ENCODE measurements at regions of chr4 and their contacts with region 1.

Region 1: DNA sequence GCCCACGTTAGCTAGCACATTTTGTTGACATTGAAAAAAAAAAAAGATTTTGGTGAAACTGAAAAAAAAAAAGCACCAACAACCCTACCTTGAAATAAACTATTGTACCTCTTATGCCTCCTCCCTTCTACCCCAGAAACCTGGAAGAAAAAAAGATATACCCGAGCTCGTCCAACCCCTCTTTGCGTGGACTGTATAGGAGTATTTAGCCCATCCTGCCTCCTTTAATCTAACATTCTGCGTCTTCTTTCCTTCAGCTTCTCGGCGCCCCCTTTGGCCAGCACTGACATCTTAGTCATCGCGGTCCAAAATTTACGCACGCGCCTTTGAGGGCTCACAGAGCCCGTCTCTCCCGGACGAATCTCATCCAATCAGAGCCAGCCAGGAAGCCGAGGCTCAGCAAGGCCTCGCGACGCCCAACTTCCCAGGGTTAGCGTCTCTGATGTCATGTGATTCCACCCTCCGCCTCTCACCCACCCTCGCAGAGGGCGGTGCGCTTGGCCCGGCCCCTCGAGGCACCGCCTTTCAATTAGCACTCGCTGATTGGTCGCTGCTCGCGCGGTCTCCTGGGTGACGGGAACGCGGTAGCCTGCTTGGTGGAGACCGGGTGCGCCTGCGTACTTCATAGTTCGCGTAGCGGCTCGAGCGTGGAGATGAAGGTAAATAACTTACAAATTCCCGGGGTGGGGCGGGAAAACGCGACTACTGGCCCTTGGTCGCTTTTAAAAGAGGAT is at the start of gene WDR19:
- DNase-seq: peak; percentile 100
- H3K4me3 ChIP-seq: peak within 1 kb of the TSS; percentile 89 to 96 (median 96)
- H3K27ac ChIP-seq: peak within 1 kb of the TSS; percentile 84
- H3K4me1 ChIP-seq: peaks cover 5% of the 10 kb centered on the region
- H3K27me3 ChIP-seq: no peaks in the 10 kb centered on the region
- CTCF ChIP-seq: peak; percentile 23 to 49
- total RNA-seq, gene WDR19: 14.4 to 23.7 TPM

Region 2: GRCh38 chr4:38856524-38857337 is 325.3 kb before region 1 on chr4 and contains the start of gene TLR6:
- CTCF ChIA-PET with region 1: no interaction called
- dilution Hi-C with region 1: no loop called
- in situ Hi-C with region 1: no loop called
- intact Hi-C with region 1: no loop called
- DNase-seq: peak; percentile 78
- H3K4me3 ChIP-seq: peak within 1 kb of the TSS in 2 of 3 experiments; percentile 37 to 43
- H3K27ac ChIP-seq: peak within 1 kb of the TSS; percentile 86
- H3K4me1 ChIP-seq: peaks cover 20% of the 10 kb centered on the region
- H3K27me3 ChIP-seq: no peaks in the 10 kb centered on the region
- CTCF ChIP-seq: peak; percentile 69 to 70
- total RNA-seq, gene TLR6: 5.8 to 6.7 TPM

Region 3: GRCh38 chr4:39285111-39285795 is 103.2 kb after region 1 on chr4:
- CTCF ChIA-PET with region 1: no interaction called
- dilution Hi-C with region 1: no loop called
- in situ Hi-C with region 1: no loop called
- intact Hi-C with region 1: loop called (anchors 1 kb)
- DNase-seq: no peak
- H3K4me3 ChIP-seq: no peak overlapping the region
- H3K27ac ChIP-seq: no peak overlapping the region
- H3K4me1 ChIP-seq: no peaks in the 10 kb centered on the region
- H3K27me3 ChIP-seq: no peaks in the 10 kb centered on the region
- CTCF ChIP-seq: no peak

Region 4: DNA sequence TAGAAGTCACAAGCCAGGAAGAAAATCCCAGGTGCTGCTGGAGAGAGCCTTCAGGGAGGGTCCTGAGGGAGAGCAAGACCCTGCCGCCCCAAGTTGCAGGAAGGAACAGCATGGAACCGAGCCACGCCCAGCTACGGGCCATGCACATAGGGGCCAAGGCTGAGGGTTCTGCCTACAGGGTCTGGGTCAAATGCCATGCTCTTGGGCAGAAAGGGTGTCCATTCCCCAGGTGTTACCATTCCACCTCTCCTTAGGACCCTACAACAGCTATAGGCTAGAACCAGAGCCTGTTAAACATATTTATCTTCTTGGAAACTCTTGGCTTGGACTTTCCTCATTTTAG is 254.1 kb after region 1 on chr4:
- CTCF ChIA-PET with region 1: no interaction called
- dilution Hi-C with region 1: no loop called
- in situ Hi-C with region 1: no loop called
- intact Hi-C with region 1: loop called (anchors 5 kb)
- DNase-seq: no peak
- H3K4me3 ChIP-seq: no peak overlapping the region
- H3K27ac ChIP-seq: no peak overlapping the region
- H3K4me1 ChIP-seq: no peaks in the 10 kb centered on the region
- H3K27me3 ChIP-seq: no peaks in the 10 kb centered on the region
- CTCF ChIP-seq: no peak

Region 5: GRCh38 chr4:39476187-39476895 is 294.3 kb after region 1 on chr4:
- CTCF ChIA-PET with region 1: interaction called, 13 read pairs
- dilution Hi-C with region 1: no loop called
- in situ Hi-C with region 1: no loop called
- intact Hi-C with region 1: no loop called
- DNase-seq: no peak
- H3K4me3 ChIP-seq: no peak overlapping the region
- H3K27ac ChIP-seq: no peak overlapping the region
- H3K4me1 ChIP-seq: no peaks in the 10 kb centered on the region
- H3K27me3 ChIP-seq: no peaks in the 10 kb centered on the region
- CTCF ChIP-seq: no peak